ENCODE measurements at regions of chr11 and their contacts with region 1.

Region 1: GRCh38 chr11:31240338-31240904 is 129.1 kb downstream of the DCDC1 start:
- DNase-seq: no peak

Region 2: GRCh38 chr11:31968461-31969358 is 728.3 kb after region 1 on chr11:
- intact Hi-C with region 1: loop called (anchors 10 kb)
- DNase-seq: no peak

Region 3: DNA sequence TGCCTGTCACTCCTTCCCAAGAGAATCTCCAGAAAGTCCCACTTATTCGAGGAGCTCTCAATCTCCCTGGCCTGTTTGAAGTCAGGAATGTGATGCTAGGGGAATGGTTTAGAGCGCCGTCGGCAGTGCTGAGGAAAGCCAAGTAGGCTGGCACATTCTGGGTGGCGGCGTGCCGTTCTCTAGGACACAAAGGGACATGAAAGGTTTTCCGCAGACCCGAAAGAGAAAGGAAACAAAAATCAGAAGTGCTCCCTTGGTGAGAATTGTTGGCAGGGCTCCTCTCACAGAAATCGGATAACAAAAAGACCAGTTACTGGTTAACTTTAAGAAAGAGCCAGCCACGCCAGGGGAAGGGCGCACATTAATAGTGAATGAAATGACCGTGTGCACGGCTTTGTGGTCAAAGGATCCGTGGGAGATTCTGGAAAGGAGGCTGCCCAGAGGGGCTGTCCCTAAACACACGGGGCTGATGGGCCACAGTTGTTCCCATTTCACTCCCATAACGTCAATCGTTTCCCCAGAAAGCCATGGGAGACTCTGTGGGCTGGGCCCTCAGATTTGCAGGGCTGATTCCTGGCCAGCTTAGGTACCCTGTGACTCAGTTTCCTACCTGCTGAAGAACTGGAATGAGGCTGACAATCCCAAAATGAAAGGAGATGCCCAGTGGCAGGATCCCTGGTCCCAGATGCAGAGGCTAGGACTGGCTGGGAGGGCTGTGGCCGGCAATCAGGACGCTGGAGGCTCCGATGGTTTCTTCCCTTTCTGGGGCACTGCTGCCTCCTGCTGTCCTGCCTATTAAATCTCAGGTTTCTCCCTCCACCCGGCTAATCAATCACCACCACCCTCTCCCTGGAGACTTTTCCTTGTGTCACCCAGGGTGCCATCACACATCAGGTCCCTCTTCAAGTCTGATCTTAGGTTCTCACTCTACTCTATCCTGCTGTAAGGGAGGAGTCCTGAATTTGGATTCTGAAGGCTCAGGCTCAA is 932.7 kb after region 1 on chr11:
- intact Hi-C with region 1: loop called (anchors 5 kb)
- DNase-seq: peak; percentile 80

Measured in cardiac septum (tissue), 1 donor.